ENCODE measurements at regions of chr1 and their contacts with region 1.

Region 1: DNA sequence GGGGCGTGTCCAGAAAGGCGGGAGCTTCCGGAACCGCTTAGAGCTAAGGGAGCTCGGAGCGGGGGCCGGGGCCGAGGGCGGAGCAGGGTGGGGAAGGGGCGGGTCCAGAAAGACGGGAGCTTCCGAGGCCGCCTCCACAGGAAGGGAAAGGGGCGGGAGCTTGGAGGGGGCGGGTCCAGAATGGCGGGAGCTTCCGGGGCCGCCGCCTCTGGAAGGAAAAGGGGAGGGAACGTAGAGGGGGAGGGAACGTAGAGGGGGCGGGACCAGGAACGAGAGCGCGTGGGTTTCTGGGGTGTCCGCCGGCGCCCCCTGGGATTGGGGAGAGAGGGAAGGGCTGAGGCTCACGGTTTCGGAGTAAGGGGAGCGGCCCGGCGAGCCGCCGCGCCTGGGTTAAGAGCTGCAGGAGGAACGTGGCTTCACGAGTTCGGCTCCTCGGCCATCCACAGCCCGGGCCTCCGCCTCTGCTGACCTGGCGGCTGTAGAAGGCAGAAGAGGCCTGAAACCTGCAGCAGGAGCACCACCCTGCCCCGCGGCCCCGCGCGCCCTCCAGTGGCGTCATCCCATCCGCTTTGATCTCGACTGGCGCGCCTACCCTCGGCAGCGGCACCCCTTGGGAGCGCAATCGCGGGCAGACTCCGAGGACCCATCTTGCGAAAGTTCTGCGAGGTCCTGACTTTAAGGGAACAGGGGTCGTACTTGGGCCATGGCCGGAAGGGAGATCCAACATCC is 22.9 kb upstream of the HPDL start:
- DNase-seq: peak; percentile 98
- ATAC-seq: peak; percentile 84
- H3K4me3 ChIP-seq: peak overlapping the region; percentile 47 to 87 (median 82)
- H3K4me3 Mint-ChIP-seq: peak overlapping the region; percentile 94
- H3K27ac ChIP-seq: peak overlapping the region; percentile 85 to 97
- H3K27ac Mint-ChIP-seq: peak overlapping the region; percentile 95
- H3K4me1 ChIP-seq: peaks cover 19 to 27% of the 10 kb centered on the region in 2 donors
- H3K4me1 Mint-ChIP-seq: peaks cover 34% of the 10 kb centered on the region
- H3K27me3 ChIP-seq: no peaks in the 10 kb centered on the region
- H3K27me3 Mint-ChIP-seq: no peaks in the 10 kb centered on the region
- CTCF ChIP-seq: peak; percentile 74

Region 2: GRCh38 chr1:44674113-44675000 is 629.4 kb before region 1 on chr1 and contains the starts of genes ARMH1 and TMEM53:
- CTCF ChIA-PET with region 1: no interaction called
- POLR2A ChIA-PET with region 1: interaction called, 7 read pairs
- intact Hi-C with region 1: loop called (anchors 1 kb)
- DNase-seq: peak; percentile 99
- ATAC-seq: peak; percentile 91
- H3K4me3 ChIP-seq: peak within 1 kb of the TSS; percentile 70 to 88 (median 84)
- H3K4me3 Mint-ChIP-seq: peak within 1 kb of the TSS; percentile 91
- H3K27ac ChIP-seq: peak within 1 kb of the TSS; percentile 87 to 94
- H3K27ac Mint-ChIP-seq: peak within 1 kb of the TSS; percentile 96
- H3K4me1 ChIP-seq: peaks cover 34 to 50% of the 10 kb centered on the region in 2 donors
- H3K4me1 Mint-ChIP-seq: peaks cover 35% of the 10 kb centered on the region
- H3K27me3 ChIP-seq: no peaks in the 10 kb centered on the region
- H3K27me3 Mint-ChIP-seq: no peaks in the 10 kb centered on the region
- CTCF ChIP-seq: no peak
- total RNA-seq, gene ARMH1: 10.2 and 11.4 TPM in 2 replicates
- total RNA-seq, gene TMEM53: 5.3 and 6.8 TPM in 2 replicates

Region 3: DNA sequence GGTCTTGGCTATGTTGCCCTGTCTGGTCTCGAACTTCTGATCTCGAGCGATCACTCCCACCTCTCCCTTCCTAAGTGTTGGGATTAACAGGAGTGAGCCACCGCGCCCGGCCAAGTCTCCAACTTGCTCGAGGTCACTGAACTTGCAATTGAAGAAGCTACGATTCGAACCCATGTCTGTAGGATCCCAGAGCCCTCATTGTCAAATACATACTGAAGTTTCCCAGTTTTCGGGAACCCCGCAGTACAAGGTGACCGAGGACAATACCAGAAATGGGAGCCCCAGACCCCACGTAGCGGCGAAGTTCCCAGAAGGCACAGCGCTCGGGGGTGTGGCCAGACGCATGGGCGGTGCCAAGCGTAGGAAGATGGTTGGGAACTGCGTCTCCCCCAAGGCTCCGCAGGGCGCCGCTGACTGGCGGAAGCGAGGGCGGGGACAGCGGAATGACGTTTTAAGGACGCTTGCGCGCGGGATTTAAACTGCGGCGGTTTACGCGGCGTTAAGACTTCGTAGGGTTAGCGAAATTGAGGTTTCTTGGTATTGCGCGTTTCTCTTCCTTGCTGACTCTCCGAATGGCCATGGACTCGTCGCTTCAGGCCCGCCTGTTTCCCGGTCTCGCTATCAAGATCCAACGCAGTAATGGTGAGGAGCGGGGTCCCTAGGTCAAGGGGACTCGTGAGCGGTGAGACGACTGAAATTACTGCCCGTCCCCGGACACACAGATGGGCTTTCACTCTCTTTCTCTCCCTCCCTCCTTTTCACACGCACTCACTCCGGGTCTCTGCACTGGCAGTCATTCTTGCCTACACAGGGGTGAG is 564.2 kb before region 1 on chr1 and contains the start of gene KIF2C:
- CTCF ChIA-PET with region 1: interaction called, 3 read pairs
- POLR2A ChIA-PET with region 1: no interaction called
- intact Hi-C with region 1: loop called (anchors 2 kb)
- DNase-seq: peak; percentile 97
- ATAC-seq: peak; percentile 100
- H3K4me3 ChIP-seq: peak within 1 kb of the TSS; percentile 54 to 90 (median 87)
- H3K4me3 Mint-ChIP-seq: peak within 1 kb of the TSS; percentile 95
- H3K27ac ChIP-seq: peak within 1 kb of the TSS; percentile 60 to 85
- H3K27ac Mint-ChIP-seq: peak within 1 kb of the TSS; percentile 93
- H3K4me1 ChIP-seq: peaks cover 7 to 12% of the 10 kb centered on the region in 2 donors
- H3K4me1 Mint-ChIP-seq: peaks cover 17% of the 10 kb centered on the region
- H3K27me3 ChIP-seq: no peaks in the 10 kb centered on the region
- H3K27me3 Mint-ChIP-seq: no peaks in the 10 kb centered on the region
- CTCF ChIP-seq: no peak
- total RNA-seq, gene KIF2C: 0.25 and 0.51 TPM in 2 replicates

Region 4: GRCh38 chr1:44799770-44800584 is 503.8 kb before region 1 on chr1 and contains the start of gene PLK3:
- CTCF ChIA-PET with region 1: interaction called, 16 read pairs
- POLR2A ChIA-PET with region 1: interaction called, 8 read pairs
- intact Hi-C with region 1: no loop called
- DNase-seq: peak; percentile 99
- ATAC-seq: peak; percentile 89
- H3K4me3 ChIP-seq: peak within 1 kb of the TSS; percentile 61 to 88 (median 85)
- H3K4me3 Mint-ChIP-seq: peak within 1 kb of the TSS; percentile 99
- H3K27ac ChIP-seq: peak within 1 kb of the TSS; percentile 84 to 93
- H3K27ac Mint-ChIP-seq: peak within 1 kb of the TSS; percentile 100
- H3K4me1 ChIP-seq: peaks cover 16 to 38% of the 10 kb centered on the region in 2 donors
- H3K4me1 Mint-ChIP-seq: peaks cover 33% of the 10 kb centered on the region
- H3K27me3 ChIP-seq: no peaks in the 10 kb centered on the region
- H3K27me3 Mint-ChIP-seq: no peaks in the 10 kb centered on the region
- CTCF ChIP-seq: peak; percentile 85
- total RNA-seq, gene PLK3: 30.1 and 35.9 TPM in 2 replicates

Region 5: GRCh38 chr1:45011837-45012638 is 291.7 kb before region 1 on chr1 and contains the start of gene UROD:
- CTCF ChIA-PET with region 1: interaction called, 388 read pairs
- POLR2A ChIA-PET with region 1: interaction called, 59 read pairs
- intact Hi-C with region 1: loop called (anchors 1 kb)
- DNase-seq: peak; percentile 94
- ATAC-seq: peak; percentile 83
- H3K4me3 ChIP-seq: peak within 1 kb of the TSS; percentile 59 to 89 (median 78)
- H3K4me3 Mint-ChIP-seq: peak within 1 kb of the TSS; percentile 91
- H3K27ac ChIP-seq: peak within 1 kb of the TSS; percentile 66 to 79
- H3K27ac Mint-ChIP-seq: peak within 1 kb of the TSS; percentile 89
- H3K4me1 ChIP-seq: peaks cover 31 to 42% of the 10 kb centered on the region in 2 donors
- H3K4me1 Mint-ChIP-seq: peaks cover 43% of the 10 kb centered on the region
- H3K27me3 ChIP-seq: no peaks in the 10 kb centered on the region
- H3K27me3 Mint-ChIP-seq: no peaks in the 10 kb centered on the region
- CTCF ChIP-seq: no peak
- total RNA-seq, gene UROD: 57.3 and 65.5 TPM in 2 replicates

Region 6: GRCh38 chr1:45266151-45266801 is 37.5 kb before region 1 on chr1:
- CTCF ChIA-PET with region 1: no interaction called
- POLR2A ChIA-PET with region 1: no interaction called
- intact Hi-C with region 1: no loop called
- DNase-seq: no peak
- ATAC-seq: no peak
- H3K4me3 ChIP-seq: no peak overlapping the region
- H3K4me3 Mint-ChIP-seq: no peak overlapping the region
- H3K27ac ChIP-seq: no peak overlapping the region
- H3K27ac Mint-ChIP-seq: no peak overlapping the region
- H3K4me1 ChIP-seq: no peaks in the 10 kb centered on the region
- H3K4me1 Mint-ChIP-seq: no peaks in the 10 kb centered on the region
- H3K27me3 ChIP-seq: no peaks in the 10 kb centered on the region
- H3K27me3 Mint-ChIP-seq: peaks cover 5% of the 10 kb centered on the region
- CTCF ChIP-seq: no peak

Region 7: GRCh38 chr1:45339789-45340570 is 36.2 kb after region 1 on chr1 and contains the starts of genes MUTYH and TOE1:
- CTCF ChIA-PET with region 1: interaction called, 25 read pairs
- POLR2A ChIA-PET with region 1: interaction called, 76 read pairs
- intact Hi-C with region 1: loop called (anchors 1 kb)
- DNase-seq: peak; percentile 92
- ATAC-seq: peak; percentile 88
- H3K4me3 ChIP-seq: peak within 1 kb of the TSS; percentile 83 to 97 (median 86)
- H3K4me3 Mint-ChIP-seq: peak within 1 kb of the TSS; percentile 91
- H3K27ac ChIP-seq: peak within 1 kb of the TSS; percentile 96
- H3K27ac Mint-ChIP-seq: peak within 1 kb of the TSS; percentile 100
- H3K4me1 ChIP-seq: peaks cover 20 to 33% of the 10 kb centered on the region in 2 donors
- H3K4me1 Mint-ChIP-seq: peaks cover 38% of the 10 kb centered on the region
- H3K27me3 ChIP-seq: no peaks in the 10 kb centered on the region
- H3K27me3 Mint-ChIP-seq: no peaks in the 10 kb centered on the region
- CTCF ChIP-seq: no peak
- total RNA-seq, gene MUTYH: 68.1 and 68.5 TPM in 2 replicates
- total RNA-seq, gene TOE1: 21.9 and 24.7 TPM in 2 replicates

Region 8: DNA sequence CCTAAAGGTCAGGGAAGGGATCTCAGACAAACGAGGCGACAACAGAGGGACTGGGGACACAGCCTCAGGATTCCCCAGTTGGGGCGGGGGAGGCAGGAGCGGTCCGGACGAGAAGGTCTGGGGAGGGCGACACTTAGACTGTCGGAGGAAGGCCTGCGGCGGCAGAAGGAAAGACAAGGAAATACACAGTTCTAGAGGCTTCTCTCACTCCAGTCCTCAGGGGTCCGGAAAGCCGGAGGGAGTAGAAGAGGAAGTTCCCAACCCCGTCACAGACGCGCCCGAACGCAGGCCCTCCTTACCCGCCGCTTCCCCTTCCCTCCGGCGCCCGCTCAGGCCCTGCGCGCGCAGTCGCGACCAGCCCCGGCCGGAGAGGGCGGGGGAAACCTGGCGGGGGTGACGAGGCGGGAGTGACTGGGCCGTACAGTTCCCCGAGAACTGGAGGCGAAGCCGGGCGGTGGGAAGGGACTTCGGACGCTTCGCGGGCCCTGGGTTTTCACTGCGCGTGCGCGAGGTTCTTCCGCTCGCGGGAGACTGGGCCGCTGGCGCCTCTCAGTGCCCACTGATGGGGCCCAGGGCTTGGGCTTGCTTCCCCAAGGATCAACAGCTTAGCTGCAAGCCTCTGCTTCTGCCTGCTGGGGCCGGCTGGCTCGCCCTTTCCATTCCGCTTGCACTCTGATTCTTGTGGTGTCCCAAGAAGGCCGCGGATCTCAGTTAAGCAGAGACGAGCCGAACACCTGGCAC is 446.7 kb after region 1 on chr1 and contains the start of gene IPP:
- CTCF ChIA-PET with region 1: no interaction called
- POLR2A ChIA-PET with region 1: interaction called, 14 read pairs
- intact Hi-C with region 1: loop called (anchors 2 kb)
- DNase-seq: peak; percentile 96
- ATAC-seq: peak; percentile 94
- H3K4me3 ChIP-seq: peak within 1 kb of the TSS; percentile 70 to 82 (median 75)
- H3K4me3 Mint-ChIP-seq: peak within 1 kb of the TSS; percentile 99
- H3K27ac ChIP-seq: peak within 1 kb of the TSS; percentile 94 to 98
- H3K27ac Mint-ChIP-seq: peak within 1 kb of the TSS; percentile 100
- H3K4me1 ChIP-seq: peaks cover 8 to 18% of the 10 kb centered on the region in 2 donors
- H3K4me1 Mint-ChIP-seq: peaks cover 15% of the 10 kb centered on the region
- H3K27me3 ChIP-seq: no peaks in the 10 kb centered on the region
- H3K27me3 Mint-ChIP-seq: no peaks in the 10 kb centered on the region
- CTCF ChIP-seq: no peak
- total RNA-seq, gene IPP: 12.1 and 12.7 TPM in 2 replicates

Region 9: DNA sequence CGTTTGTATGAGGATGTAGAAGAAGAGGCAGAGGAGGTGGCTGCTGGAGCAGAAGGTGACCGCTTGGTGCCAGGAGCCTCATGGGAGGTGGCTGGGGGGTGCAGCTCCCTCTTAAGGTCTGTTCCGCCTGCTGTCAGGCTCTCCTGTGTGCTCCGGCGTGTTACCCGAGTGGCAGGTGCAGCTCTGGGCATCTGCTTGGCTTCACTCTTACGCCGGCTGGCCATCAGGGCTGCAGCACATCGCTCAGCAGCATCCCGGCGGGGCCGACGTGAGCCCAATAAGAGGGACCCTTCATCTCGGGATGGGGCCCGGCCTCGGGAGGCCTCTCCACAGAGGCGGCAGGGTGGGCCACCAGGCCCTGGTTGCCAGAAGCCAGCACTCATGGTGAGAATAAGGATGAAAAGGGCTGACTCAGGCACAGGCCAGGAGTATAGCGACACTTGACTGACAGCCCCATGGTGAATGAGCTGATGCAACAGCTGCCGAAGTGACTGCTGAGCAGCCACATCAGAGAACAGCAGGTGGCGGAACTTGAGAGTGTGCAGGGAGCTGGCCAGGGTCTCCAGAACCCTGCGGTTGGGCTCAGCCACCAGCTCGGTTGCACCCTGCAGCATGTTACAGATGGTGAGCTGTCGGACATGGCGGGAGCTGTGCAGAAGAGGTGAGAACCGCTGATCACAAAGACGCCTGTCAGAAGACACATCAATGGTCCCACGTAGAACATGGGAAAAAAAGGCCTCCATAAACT is 982.2 kb after region 1 on chr1:
- CTCF ChIA-PET with region 1: no interaction called
- POLR2A ChIA-PET with region 1: no interaction called
- intact Hi-C with region 1: no loop called
- DNase-seq: no peak
- ATAC-seq: no peak
- H3K4me3 ChIP-seq: no peak overlapping the region
- H3K4me3 Mint-ChIP-seq: no peak overlapping the region
- H3K27ac ChIP-seq: no peak overlapping the region
- H3K27ac Mint-ChIP-seq: no peak overlapping the region
- H3K4me1 ChIP-seq: no peaks in the 10 kb centered on the region
- H3K4me1 Mint-ChIP-seq: no peaks in the 10 kb centered on the region
- H3K27me3 ChIP-seq: no peaks in the 10 kb centered on the region
- H3K27me3 Mint-ChIP-seq: no peaks in the 10 kb centered on the region
- CTCF ChIP-seq: no peak